ENCODE measurements at regions of chr5 and their contacts with region 1.

Region 1: DNA sequence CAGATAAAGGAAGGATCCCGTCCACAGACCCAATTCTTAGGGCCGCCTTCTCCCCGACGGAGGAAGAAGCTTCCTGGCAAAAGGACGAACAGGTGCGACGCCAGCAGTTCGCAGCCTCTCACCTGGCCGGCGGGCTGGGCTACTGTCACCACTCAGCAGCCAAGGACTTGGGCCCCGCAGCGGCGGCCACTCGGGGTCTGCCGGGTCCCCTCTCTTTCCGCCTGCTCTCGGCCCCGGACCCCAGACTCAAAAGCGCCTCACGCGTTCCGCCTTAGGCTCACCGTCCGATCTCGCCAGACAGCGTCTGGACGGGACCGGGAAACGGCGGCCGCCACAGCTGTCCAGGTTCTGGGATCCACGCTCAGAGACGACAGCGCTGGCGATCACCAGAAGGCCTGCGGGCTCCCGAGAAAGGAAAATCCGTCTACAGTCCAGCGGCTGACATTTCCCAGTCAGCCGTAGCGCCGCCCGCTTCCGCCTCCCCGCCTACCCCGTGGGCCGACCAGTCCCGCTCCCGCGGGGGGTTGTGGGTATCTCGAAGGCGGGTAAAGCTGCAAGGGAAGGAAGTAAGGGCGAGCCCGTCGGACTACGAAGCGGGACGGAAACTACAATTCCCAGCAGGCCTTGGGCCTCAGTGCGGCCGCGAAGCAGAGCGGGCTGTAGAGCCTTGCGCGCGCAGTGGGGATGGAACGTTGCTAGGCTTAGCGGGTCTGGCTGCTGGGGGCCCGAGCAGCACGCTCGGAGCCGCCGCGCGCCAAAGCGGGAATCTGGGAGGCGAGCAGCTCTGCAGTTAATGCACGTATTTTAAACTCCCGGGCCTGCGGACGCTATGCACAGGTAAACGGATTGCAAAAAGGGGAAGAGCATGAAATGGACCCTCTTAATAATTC is at the starts of genes LMBRD2 and SKP2:
- DNase-seq: peak; percentile 95
- ATAC-seq: peak; percentile 97
- H3K4me3 Mint-ChIP-seq: peak within 1 kb of the TSS; percentile 96
- H3K27ac Mint-ChIP-seq: peak within 1 kb of the TSS; percentile 85
- H3K4me1 Mint-ChIP-seq: peaks cover 40% of the 10 kb centered on the region
- H3K27me3 Mint-ChIP-seq: no peaks in the 10 kb centered on the region
- CTCF ChIP-seq: no peak
- total RNA-seq, gene LMBRD2: 6.4 and 8.9 TPM in 2 replicates
- total RNA-seq, gene SKP2: 18.5 TPM in 2 replicates

Region 2: GRCh38 chr5:34915139-34915855 is 1236.4 kb before region 1 on chr5 and contains the starts of genes BRIX1 and RAD1:
- CTCF ChIA-PET with region 1: no interaction called
- POLR2A ChIA-PET with region 1: interaction called, 10 read pairs
- intact Hi-C with region 1: loop called (anchors 1 kb)
- DNase-seq: peak; percentile 92
- ATAC-seq: peak; percentile 98
- H3K4me3 Mint-ChIP-seq: peak within 1 kb of the TSS; percentile 57
- H3K27ac Mint-ChIP-seq: no peak within 1 kb of the TSS
- H3K4me1 Mint-ChIP-seq: peaks cover 34% of the 10 kb centered on the region
- H3K27me3 Mint-ChIP-seq: no peaks in the 10 kb centered on the region
- CTCF ChIP-seq: no peak
- total RNA-seq, gene BRIX1: 40.6 and 42.4 TPM in 2 replicates
- total RNA-seq, gene RAD1: 20.2 and 24.4 TPM in 2 replicates